PC-3 (cell line): ENCODE measurements at regions of chr1 and their contacts with region 1.

Region 1: DNA sequence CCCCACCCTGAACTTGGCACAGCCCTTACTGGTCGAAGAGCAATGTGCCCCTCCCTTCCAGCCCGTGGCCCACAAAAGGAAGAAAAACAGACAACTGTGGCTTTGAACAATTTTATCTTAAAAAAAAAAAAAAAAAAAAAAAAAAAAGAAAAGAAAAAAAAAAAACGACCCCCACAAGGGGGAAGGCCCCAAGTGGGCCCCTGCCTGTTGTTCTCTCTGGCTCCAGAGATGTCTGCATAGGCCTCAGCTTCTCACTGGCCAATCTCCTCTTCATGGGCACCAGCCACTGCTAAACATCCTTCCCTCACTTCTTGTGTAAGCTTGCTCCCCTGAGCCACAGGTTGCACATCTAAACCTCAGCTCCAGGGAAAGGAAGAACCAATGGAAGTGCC is 386 bp upstream of the TSTD1 start:
- DNase-seq: no peak
- ATAC-seq: no peak
- H3K4me3 ChIP-seq: peak overlapping the region; percentile 65; the same call in 1 of the 2 replicates
- H3K27ac ChIP-seq: no peak overlapping the region
- H3K4me1 ChIP-seq: peaks cover 2% of the 10 kb centered on the region
- H3K27me3 ChIP-seq: no peaks in the 10 kb centered on the region
- CTCF ChIP-seq: no peak

Region 2: GRCh38 chr1:161059293-161059692 is 20.1 kb after region 1 on chr1:
- CTCF ChIA-PET with region 1: no interaction called
- POLR2A ChIA-PET with region 1: interaction called, 34 read pairs
- intact Hi-C with region 1: no loop called
- DNase-seq: no peak
- ATAC-seq: no peak
- H3K4me3 ChIP-seq: no peak overlapping the region
- H3K27ac ChIP-seq: no peak overlapping the region
- H3K4me1 ChIP-seq: no peaks in the 10 kb centered on the region
- H3K27me3 ChIP-seq: no peaks in the 10 kb centered on the region
- CTCF ChIP-seq: no peak

Region 3: DNA sequence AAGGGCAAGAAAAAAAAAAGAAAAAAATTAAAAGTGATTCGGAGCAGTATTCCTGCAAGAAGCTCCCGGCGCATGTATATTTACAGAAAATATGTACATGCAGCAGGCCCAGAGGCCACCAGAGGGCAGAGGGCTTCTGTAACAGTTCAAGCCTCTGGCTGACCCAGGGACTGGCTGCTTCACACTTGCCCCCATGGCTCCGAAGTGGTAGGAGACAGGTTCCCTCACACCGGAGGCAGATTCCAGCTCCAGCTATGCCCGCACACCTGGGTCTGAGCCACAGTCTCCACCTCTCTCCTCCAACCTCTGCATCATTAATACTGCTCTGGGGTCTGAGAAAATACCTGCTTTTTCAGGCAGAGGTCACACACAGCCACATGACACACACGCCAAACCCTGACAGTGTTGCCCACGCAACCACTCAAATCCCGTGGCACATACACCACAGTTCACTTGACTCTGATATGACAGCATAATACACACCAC is 32.8 kb after region 1 on chr1:
- CTCF ChIA-PET with region 1: no interaction called
- POLR2A ChIA-PET with region 1: no interaction called
- intact Hi-C with region 1: no loop called
- DNase-seq: peak; percentile 70
- ATAC-seq: peak; percentile 56
- H3K4me3 ChIP-seq: no peak overlapping the region
- H3K27ac ChIP-seq: no peak overlapping the region
- H3K4me1 ChIP-seq: no peaks in the 10 kb centered on the region
- H3K27me3 ChIP-seq: no peaks in the 10 kb centered on the region
- CTCF ChIP-seq: peak; percentile 74